ENCODE measurements at regions of chr2 and their contacts with region 1.

Region 1: GRCh38 chr2:107936433-107937359 is 49.6 kb upstream of the SLC5A7 start:
- DNase-seq: no peak
- ATAC-seq: no peak
- H3K4me3 ChIP-seq: no peak overlapping the region
- H3K27ac ChIP-seq: no peak overlapping the region
- H3K4me1 ChIP-seq: no peaks in the 10 kb centered on the region
- H3K27me3 ChIP-seq: peaks cover 5% of the 10 kb centered on the region; the same call in 1 of the 2 replicates
- CTCF ChIP-seq: peak; percentile 61; the same call in 1 of the 2 replicates

Region 2: DNA sequence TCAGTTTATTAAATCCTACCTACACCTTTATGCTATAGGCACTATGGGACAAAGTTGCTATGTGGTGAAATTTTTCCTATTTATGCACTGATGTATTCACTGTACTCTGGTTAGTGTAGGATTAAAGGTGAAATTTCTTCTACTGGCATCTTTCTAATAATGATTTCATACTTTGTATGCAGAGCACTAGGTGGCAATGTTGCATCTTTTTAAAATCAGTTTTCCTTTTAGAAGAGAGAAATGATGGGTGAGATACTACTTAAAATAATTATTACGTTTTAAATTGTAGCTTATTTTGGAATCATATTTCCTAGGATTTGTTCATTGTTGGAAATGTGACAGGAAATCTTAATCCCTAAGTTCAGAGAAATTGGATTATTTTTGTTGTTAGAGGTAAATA is 1298.7 kb before region 1 on chr2:
- CTCF ChIA-PET with region 1: no interaction called
- POLR2A ChIA-PET with region 1: no interaction called
- in situ Hi-C with region 1: no loop called
- intact Hi-C with region 1: loop called (anchors 10 kb)
- DNase-seq: no peak
- ATAC-seq: no peak
- H3K4me3 ChIP-seq: no peak overlapping the region
- H3K27ac ChIP-seq: no peak overlapping the region
- H3K4me1 ChIP-seq: no peaks in the 10 kb centered on the region
- H3K27me3 ChIP-seq: no peaks in the 10 kb centered on the region; the same call in 1 of the 2 replicates
- CTCF ChIP-seq: peak; percentile 47; the same call in 1 of the 2 replicates

Region 3: DNA sequence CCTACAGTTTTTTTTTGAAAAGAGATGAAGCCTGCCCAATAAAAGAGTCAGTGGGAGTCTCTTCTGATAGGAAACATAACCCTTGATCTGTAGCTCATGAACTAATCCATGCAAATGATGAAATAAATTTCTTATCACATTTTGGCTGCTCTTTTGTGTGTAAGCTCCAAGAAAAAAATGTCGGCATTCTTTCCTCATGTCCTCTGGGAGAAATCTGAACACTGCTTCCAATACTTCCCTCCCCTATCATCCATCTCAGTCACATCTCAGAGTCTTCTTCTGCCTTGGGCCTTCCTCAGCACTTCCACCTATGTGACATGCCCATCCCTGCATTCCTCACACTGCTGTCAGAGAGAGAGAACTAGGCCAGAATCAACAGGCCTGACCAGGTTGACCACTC is 655.1 kb before region 1 on chr2:
- CTCF ChIA-PET with region 1: no interaction called
- POLR2A ChIA-PET with region 1: no interaction called
- in situ Hi-C with region 1: no loop called
- intact Hi-C with region 1: no loop called
- DNase-seq: no peak
- ATAC-seq: no peak
- H3K4me3 ChIP-seq: no peak overlapping the region
- H3K27ac ChIP-seq: no peak overlapping the region
- H3K4me1 ChIP-seq: no peaks in the 10 kb centered on the region
- H3K27me3 ChIP-seq: no peaks in the 10 kb centered on the region
- CTCF ChIP-seq: no peak

Region 4: DNA sequence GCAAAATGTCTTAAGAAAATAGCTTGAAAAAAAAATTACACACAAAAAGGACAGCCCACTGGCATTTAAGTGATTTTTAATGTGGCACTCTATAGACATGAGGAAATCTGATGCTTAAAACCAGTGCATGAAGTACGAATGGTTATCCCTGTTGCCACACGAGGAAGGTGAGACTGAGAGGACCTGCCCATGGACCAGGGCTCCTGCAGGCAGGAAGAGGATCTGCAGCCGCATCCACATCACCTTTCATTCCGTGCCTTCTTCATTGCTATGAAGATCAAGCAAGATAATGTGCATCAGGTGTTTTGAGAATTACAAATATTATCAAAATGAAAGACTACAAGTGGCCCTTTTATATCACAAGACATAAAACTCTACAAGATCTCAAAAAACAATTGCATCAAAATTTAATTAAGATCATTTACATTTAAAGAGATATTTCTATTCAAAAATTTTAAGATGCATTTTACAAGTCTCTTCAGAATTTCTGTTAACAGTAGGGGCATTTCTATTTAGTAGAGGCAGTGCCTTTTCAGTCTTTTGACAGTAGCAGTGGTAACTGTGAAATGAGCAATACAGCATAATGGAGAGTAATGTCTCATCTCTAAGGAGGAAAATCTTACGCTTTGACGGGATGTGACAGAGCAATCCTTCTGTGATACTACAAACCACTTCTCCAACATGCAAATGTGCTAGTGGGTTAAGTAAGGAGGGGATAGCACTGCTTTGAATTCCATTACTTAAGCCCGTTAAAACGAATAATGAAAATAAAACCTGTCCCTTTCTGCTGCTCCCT is 133.0 kb after region 1 on chr2:
- CTCF ChIA-PET with region 1: no interaction called
- POLR2A ChIA-PET with region 1: no interaction called
- in situ Hi-C with region 1: no loop called
- intact Hi-C with region 1: no loop called
- DNase-seq: no peak
- ATAC-seq: no peak
- H3K4me3 ChIP-seq: no peak overlapping the region
- H3K27ac ChIP-seq: no peak overlapping the region
- H3K4me1 ChIP-seq: no peaks in the 10 kb centered on the region
- H3K27me3 ChIP-seq: no peaks in the 10 kb centered on the region
- CTCF ChIP-seq: peak; percentile 21; the same call in 1 of the 2 replicates

Region 5: DNA sequence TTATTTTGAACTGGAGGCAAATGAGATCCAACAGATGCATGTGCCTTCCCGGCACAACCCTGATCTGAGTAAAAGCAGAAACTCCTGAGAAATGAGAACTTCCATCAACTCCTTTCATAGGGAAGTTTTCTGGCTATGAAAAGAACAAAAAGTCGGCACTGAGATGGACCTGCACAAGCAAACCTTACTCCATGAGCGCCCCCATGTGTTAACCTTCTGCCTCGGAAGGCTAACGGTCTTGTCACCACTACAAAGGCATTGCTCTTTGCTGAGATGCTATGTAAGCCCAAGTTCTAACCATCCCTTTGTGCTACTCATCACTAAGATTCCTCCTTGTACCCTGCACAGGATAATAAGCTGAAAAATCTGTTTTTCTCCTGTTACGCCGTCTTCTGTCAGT is 245.8 kb after region 1 on chr2:
- CTCF ChIA-PET with region 1: no interaction called
- POLR2A ChIA-PET with region 1: no interaction called
- in situ Hi-C with region 1: no loop called
- intact Hi-C with region 1: loop called (anchors 2 kb)
- DNase-seq: no peak
- ATAC-seq: peak; percentile 78; the same call in 1 of the 2 replicates
- H3K4me3 ChIP-seq: no peak overlapping the region
- H3K27ac ChIP-seq: no peak overlapping the region
- H3K4me1 ChIP-seq: no peaks in the 10 kb centered on the region
- H3K27me3 ChIP-seq: peaks cover 2% of the 10 kb centered on the region; the same call in 1 of the 2 replicates
- CTCF ChIP-seq: peak; percentile 71

Measured in Panc1 (cell line).